ENCODE measurements at regions of chr12 and their contacts with region 1.

Region 1: DNA sequence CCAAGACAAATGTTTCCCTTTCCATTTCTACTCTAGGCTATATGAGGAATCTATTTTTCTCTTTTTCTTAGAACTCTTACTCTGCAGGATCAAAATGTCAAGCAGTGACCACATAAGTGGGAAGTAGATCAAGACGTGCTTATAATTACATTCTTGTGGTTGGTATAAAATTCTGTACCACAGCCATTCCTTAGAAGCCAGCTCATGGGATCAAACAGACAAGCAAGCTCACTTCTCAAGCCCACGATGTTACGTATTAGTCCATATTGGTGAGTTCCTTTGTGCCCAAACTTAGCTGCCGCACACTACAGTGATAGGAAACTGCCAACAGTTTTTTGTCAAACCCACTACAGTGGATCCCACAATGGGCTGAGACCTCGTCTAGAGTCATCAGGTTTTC is 53.4 kb downstream of the IFNG start:
- DNase-seq: no peak
- H3K4me3 Mint-ChIP-seq: no peak overlapping the region
- H3K27ac Mint-ChIP-seq: no peak overlapping the region
- H3K4me1 Mint-ChIP-seq: peaks cover 16% of the 10 kb centered on the region
- H3K27me3 Mint-ChIP-seq: no peaks in the 10 kb centered on the region

Region 2: DNA sequence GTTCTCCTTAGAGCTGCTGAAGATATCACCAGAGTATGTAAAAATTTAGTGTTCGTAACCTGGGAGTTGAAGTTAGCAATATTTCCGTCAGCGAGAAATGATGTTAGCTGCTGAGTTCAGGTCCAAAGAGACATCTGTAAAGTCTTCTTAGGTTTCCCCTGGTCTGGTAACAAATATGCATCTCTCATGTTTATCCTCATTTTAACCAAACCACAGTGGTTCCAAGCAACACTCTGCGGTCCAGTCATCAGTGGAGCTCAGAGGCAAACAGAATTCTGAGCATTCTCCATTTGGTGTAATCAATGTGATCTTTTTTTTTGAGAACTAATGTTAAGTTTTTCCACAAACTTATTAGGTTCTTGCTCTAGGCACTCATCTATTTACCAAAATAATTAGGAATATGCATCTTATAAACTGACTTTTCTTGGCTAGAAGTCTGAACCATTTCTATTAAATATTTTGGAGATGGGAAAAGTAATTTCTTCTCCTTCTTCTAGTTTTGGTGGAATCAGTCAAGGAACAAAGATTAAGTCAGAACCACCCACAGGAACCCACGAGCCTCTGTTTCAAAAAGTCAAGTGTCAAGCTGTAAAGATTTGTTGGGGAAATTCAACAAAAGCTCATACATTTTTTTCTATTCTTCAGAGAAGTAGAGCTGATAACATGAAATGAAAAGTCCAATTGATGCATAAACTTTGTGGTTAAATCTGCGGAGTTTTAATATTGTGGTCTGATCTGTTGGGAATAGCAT is 11.3 kb before region 1 on chr12:
- intact Hi-C with region 1: loop called (anchors 1 kb)
- DNase-seq: no peak
- H3K4me3 Mint-ChIP-seq: no peak overlapping the region
- H3K27ac Mint-ChIP-seq: peak overlapping the region; percentile 49
- H3K4me1 Mint-ChIP-seq: peaks cover 39% of the 10 kb centered on the region
- H3K27me3 Mint-ChIP-seq: no peaks in the 10 kb centered on the region

Region 3: DNA sequence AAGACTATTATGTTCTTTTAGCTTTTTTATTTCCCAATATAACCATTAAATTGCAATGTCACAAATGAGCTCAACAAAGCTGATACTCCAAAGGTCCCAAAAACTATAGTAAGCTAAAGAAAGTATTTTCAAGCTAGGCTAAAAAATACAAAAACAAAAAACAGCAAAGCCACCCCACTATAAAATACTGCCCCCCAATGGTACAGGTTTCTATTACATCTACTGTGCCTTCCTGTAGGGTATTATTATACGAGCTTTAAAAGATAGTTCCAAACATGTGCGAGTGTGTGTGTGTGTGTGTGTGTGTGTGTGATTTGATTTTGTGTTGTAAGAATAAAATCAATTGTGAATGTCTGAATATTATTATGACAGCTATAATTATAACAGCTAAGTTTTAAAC is 52.3 kb after region 1 on chr12:
- intact Hi-C with region 1: loop called (anchors 2 kb)
- DNase-seq: no peak
- H3K4me3 Mint-ChIP-seq: peak overlapping the region; percentile 91
- H3K27ac Mint-ChIP-seq: peak overlapping the region; percentile 87
- H3K4me1 Mint-ChIP-seq: peaks cover 65% of the 10 kb centered on the region
- H3K27me3 Mint-ChIP-seq: no peaks in the 10 kb centered on the region

Measured in activated T-helper 1 cell treated with anti-CD3 and anti-CD28 coated beads, Interleukin-12 subunit alpha, Interleukin-12 subunit beta, Interleukin-2, Interleukin-4 antibody, amounts not matched to agents 30 ng/mL and 10 ng/mL and 1 ng/mL, durations not matched to agents 14 hours and 24 hours and 36 hours (primary cell).